ENCODE measurements at regions of chr12 and their contacts with region 1.

Region 1: DNA sequence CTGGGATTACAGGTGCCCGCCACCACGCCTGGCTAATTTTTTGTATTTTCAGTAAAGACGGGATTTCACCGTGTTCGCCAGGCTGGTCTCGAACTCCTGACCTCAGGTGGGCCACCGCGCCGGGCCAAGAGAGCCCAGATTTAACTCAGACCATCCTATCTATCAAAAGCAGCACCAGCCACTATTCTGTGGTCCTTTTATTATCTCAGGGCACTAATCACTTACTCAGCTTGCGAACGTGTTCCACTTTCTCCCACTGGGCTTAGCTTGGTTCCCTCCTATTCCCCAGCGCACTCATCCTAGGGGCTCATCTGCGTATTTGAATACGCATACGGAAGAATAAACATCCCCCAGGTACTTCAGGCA is 16.2 kb upstream of the AACS start:
- DNase-seq: no peak
- H3K4me3 Mint-ChIP-seq: peak overlapping the region; percentile 80
- H3K27ac Mint-ChIP-seq: peak overlapping the region; percentile 85
- H3K4me1 Mint-ChIP-seq: peaks cover 10% of the 10 kb centered on the region
- H3K27me3 Mint-ChIP-seq: no peaks in the 10 kb centered on the region

Region 2: DNA sequence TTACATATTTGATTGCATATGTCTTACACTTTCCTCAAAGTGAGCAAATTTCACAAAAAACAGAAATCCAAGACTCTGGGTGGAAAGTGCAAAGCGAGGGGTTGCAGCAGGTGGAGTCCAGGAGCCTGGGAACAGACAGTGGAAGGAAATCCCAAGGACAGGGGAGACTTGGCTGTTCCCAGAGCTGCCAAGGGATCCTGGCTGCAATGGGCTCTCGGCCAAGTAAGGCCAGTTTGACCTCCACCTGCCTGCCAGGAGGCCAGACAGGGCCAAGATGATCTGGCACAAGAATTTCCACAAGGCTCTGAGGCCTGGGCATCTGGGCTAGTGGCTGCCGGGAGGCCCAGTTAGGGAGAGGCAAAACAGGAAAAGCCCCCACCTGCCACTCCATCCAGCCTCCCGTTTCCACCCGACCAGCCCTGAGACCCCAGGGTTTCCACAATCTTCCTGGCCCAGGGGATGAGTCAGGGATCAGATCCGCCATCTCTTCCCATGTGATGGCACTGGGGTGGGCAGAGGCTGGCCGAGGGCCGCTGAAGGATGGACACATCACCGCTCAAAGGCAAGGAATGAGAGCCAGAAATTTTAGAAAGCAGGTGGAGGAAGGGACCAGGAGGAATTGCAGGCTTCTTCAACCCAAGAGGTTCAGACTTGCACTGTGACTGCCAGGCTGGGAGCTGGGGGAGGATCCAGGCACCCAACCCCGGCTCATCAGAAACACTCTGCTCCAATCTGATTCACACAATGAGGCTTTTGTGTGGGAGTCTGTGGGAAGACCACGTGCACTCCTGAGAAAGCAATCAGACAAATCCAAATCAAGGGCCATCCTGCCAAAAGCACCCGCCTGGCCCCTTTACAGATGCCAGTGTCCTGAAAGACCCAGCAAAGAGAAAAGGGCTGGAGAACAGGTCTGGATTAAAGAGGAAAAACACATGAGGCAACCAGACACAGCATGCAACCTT is 201.7 kb before region 1 on chr12:
- CTCF ChIA-PET with region 1: no interaction called
- POLR2A ChIA-PET with region 1: no interaction called
- DNase-seq: no peak
- H3K4me3 Mint-ChIP-seq: no peak overlapping the region
- H3K27ac Mint-ChIP-seq: no peak overlapping the region
- H3K4me1 Mint-ChIP-seq: peaks cover 6% of the 10 kb centered on the region
- H3K27me3 Mint-ChIP-seq: no peaks in the 10 kb centered on the region

Region 3: GRCh38 chr12:125032536-125033319 is 16.3 kb before region 1 on chr12:
- CTCF ChIA-PET with region 1: no interaction called
- POLR2A ChIA-PET with region 1: no interaction called
- DNase-seq: no peak
- H3K4me3 Mint-ChIP-seq: no peak overlapping the region
- H3K27ac Mint-ChIP-seq: no peak overlapping the region
- H3K4me1 Mint-ChIP-seq: no peaks in the 10 kb centered on the region
- H3K27me3 Mint-ChIP-seq: no peaks in the 10 kb centered on the region

Region 4: GRCh38 chr12:125065021-125065795 is 16.1 kb after region 1 on chr12 and contains the start of gene AACS:
- CTCF ChIA-PET with region 1: interaction called, 13 read pairs
- POLR2A ChIA-PET with region 1: no interaction called
- DNase-seq: peak; percentile 75
- H3K4me3 Mint-ChIP-seq: peak within 1 kb of the TSS; percentile 73
- H3K27ac Mint-ChIP-seq: peak within 1 kb of the TSS; percentile 80
- H3K4me1 Mint-ChIP-seq: peaks cover 17% of the 10 kb centered on the region
- H3K27me3 Mint-ChIP-seq: peaks cover 15% of the 10 kb centered on the region
- total RNA-seq, gene AACS: 17.8 to 19.1 TPM

Region 5: DNA sequence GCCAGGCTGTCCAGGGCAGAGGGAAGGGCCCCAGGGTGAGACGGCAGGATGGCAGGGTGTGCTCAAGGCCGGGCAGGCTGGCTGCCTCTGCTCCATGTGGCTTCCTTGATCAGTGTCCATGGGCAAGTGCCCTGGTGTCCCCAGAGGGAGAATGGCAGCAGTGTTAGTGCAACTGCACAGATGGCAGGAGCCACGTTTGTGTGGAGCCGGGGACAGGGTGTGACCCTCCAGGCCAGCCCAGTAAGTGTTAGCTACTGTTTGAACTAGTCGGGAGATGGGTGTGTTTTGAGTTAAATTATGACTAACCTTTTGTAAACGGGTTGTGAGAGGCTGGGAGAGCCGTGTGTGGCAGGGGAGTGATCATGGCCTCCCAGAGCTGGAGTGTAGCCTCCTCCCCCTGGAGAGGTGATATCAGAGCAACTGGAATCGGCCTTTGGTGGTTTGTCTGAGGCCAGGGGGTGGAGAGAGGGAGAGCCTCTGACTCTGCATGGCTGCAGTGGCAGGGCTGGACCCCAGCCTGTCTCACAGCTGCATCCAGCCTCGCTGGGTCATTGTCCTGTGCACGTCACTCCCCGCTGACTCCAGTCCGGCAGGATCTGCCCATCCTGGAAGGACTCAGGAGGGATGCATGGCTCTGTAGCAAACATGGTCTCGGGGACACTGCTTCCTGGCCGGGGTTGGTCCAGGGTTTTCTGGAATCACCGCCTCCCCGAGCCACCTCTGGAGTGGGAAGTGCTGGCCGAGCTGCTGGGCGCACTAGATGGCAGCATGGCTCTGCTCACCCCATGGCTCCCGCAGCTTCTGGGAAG is 44.0 kb after region 1 on chr12:
- CTCF ChIA-PET with region 1: no interaction called
- POLR2A ChIA-PET with region 1: no interaction called
- DNase-seq: no peak
- H3K4me3 Mint-ChIP-seq: no peak overlapping the region
- H3K27ac Mint-ChIP-seq: no peak overlapping the region
- H3K4me1 Mint-ChIP-seq: peaks cover 14% of the 10 kb centered on the region
- H3K27me3 Mint-ChIP-seq: no peaks in the 10 kb centered on the region